Left lung (tissue), 14 donors: ENCODE measurements at regions of chr20 and their contacts with region 1.

Region 1: GRCh38 chr20:815914-816606 is 17.5 kb upstream of the FAM110A start:
- DNase-seq: peak; percentile 54 to 83 (median 62)
- ATAC-seq: peak; percentile 86
- H3K4me3 ChIP-seq: no peak overlapping the region
- H3K27ac ChIP-seq: no peak overlapping the region
- H3K4me1 ChIP-seq: no peaks in the 10 kb centered on the region
- H3K27me3 ChIP-seq: peaks cover 0 to 26% of the 10 kb centered on the region in 2 donors
- CTCF ChIP-seq: peak; percentile 97 to 100

Region 2: GRCh38 chr20:956330-956951 is 140.4 kb after region 1 on chr20:
- intact Hi-C with region 1: loop called (anchors 5 kb)
- DNase-seq: peak; percentile 42 to 91 (median 68)
- ATAC-seq: peak; percentile 91
- H3K4me3 ChIP-seq: no peak overlapping the region
- H3K27ac ChIP-seq: no peak overlapping the region
- H3K4me1 ChIP-seq: peaks cover 0 to 3% of the 10 kb centered on the region in 2 donors
- H3K27me3 ChIP-seq: peaks cover 0 to 58% of the 10 kb centered on the region in 2 donors
- CTCF ChIP-seq: peak; percentile 97 to 98